ENCODE measurements at regions of chr17 and their contacts with region 1.

Region 1: GRCh38 chr17:79393358-79394202 is 217.3 kb downstream of the RBFOX3 start:
- DNase-seq: peak; percentile 50
- ATAC-seq: peak; percentile 82
- H3K4me3 ChIP-seq: no peak overlapping the region
- H3K27ac ChIP-seq: no peak overlapping the region
- H3K4me1 ChIP-seq: no peaks in the 10 kb centered on the region
- H3K27me3 ChIP-seq: peaks cover 23 to 92% of the 10 kb centered on the region in 2 experiments
- CTCF ChIP-seq: peak; percentile 98
- EP300 ChIP-seq: no peak
- POLR2A ChIP-seq: no peak
- RAD21 ChIP-seq: peak; percentile 91

Region 2: GRCh38 chr17:79087428-79088143 is 306.0 kb before region 1 on chr17:
- CTCF ChIA-PET with region 1: interaction called, 36 read pairs
- POLR2A ChIA-PET with region 1: no interaction called
- in situ Hi-C with region 1: loop called (anchors 5 kb)
- intact Hi-C with region 1: loop called (anchors 1 kb)
- DNase-seq: peak; percentile 41
- ATAC-seq: peak; percentile 69
- H3K4me3 ChIP-seq: no peak overlapping the region
- H3K27ac ChIP-seq: no peak overlapping the region
- H3K4me1 ChIP-seq: no peaks in the 10 kb centered on the region
- H3K27me3 ChIP-seq: peaks cover 2 to 22% of the 10 kb centered on the region in 2 experiments; a peak in 3 of 5 replicates
- CTCF ChIP-seq: peak; percentile 98
- EP300 ChIP-seq: no peak
- POLR2A ChIP-seq: no peak
- RAD21 ChIP-seq: peak; percentile 87

Region 3: GRCh38 chr17:79188048-79188447 is 205.5 kb before region 1 on chr17:
- CTCF ChIA-PET with region 1: interaction called, 7 read pairs
- POLR2A ChIA-PET with region 1: no interaction called
- in situ Hi-C with region 1: loop called (anchors 5 kb)
- intact Hi-C with region 1: no loop called
- DNase-seq: no peak
- ATAC-seq: peak; percentile 59
- H3K4me3 ChIP-seq: no peak overlapping the region
- H3K27ac ChIP-seq: no peak overlapping the region
- H3K4me1 ChIP-seq: no peaks in the 10 kb centered on the region
- H3K27me3 ChIP-seq: peaks cover 24 to 87% of the 10 kb centered on the region in 2 experiments; a peak in 4 of 5 replicates
- CTCF ChIP-seq: peak; percentile 85
- EP300 ChIP-seq: no peak
- POLR2A ChIP-seq: no peak
- RAD21 ChIP-seq: peak; percentile 84

Measured in HepG2 (cell line).